GM12878 (cell line): ENCODE measurements at regions of chr12 and their contacts with region 1.

Region 1: DNA sequence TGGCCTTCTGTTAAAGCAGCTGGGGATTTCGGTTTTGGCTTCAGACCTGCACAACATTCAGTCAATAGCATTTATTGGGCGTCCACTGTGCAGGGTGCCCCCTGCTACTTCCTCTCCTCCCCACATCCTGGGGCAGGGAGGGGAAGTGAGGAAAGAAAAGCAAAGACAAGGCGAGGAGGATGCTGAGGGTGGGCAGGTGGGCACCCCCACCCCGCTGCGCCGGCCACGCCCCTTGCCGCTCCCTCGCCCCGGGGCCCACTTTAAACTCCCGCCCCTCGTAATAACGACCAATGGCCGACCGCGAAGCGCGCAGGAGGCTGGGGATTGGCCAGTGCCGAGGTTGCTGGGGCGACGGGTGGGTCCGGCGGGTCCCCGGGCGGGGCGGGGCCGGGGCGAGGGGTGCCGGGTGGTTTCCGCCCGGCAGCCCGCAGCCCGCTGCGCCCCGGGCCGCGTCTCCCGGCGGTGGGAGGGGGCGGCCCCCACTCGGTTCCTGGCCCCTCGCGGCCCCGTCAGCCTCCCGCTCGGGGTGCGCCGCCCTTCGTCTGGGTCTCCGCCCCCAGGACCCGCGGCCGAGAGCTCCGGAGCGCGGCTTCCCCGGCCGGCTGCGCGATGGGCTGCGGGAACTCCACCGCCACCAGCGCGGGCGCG is at the start of gene C12orf75:
- DNase-seq: peak; percentile 77
- ATAC-seq: peak; percentile 85
- H3K4me3 ChIP-seq: peak within 1 kb of the TSS; percentile 81
- H3K27ac ChIP-seq: peak within 1 kb of the TSS; percentile 49
- H3K4me1 ChIP-seq: peaks cover 41% of the 10 kb centered on the region
- H3K27me3 ChIP-seq: no peaks in the 10 kb centered on the region
- CTCF ChIP-seq: no peak
- EP300 ChIP-seq: no peak
- POLR2A ChIP-seq: peak; percentile 65
- RAD21 ChIP-seq: no peak
- polyA plus RNA-seq, gene C12orf75: 40.7 to 84.7 TPM

Region 2: DNA sequence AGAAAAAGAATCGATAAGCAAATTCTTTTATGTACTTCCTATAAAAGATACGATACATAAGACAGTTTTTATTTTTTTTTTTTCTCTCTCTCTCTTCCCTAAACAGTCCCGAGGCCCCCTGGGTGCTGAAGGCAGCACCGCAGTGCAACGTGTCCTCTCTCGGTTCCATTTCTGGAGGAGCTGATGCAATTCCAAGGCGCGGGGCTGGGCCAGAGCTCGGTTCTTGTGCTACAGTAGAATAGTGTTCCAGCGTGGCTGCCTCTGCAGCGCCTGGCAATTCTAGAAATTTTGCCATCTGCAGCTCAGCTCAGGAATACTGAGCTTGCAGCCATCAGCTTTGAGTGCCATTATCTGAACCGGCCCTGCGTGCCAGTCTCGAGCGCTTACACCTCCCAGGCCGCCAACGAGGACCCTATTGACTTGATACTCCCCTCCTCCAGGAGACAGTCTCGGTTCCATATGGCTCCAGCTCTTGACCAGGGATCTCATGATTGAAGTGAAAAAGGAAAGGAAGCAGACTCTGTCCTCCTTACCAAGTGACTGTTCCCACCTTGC is 246.8 kb before region 1 on chr12:
- CTCF ChIA-PET with region 1: no interaction called
- POLR2A ChIA-PET with region 1: no interaction called
- RAD21 ChIA-PET with region 1: no interaction called
- SMC1A ChIA-PET with region 1: no interaction called
- in situ Hi-C with region 1: no loop called
- intact Hi-C with region 1: no loop called
- DNase-seq: no peak
- ATAC-seq: no peak; the same call in 2 of the 3 replicates
- H3K4me3 ChIP-seq: peak overlapping the region; percentile 81
- H3K27ac ChIP-seq: peak overlapping the region; percentile 25; the same call in 1 of the 2 replicates
- H3K4me1 ChIP-seq: peaks cover 7% of the 10 kb centered on the region
- H3K27me3 ChIP-seq: no peaks in the 10 kb centered on the region; a peak in 1 of 4 replicates
- CTCF ChIP-seq: no peak
- EP300 ChIP-seq: no peak
- POLR2A ChIP-seq: no peak
- RAD21 ChIP-seq: no peak

Region 3: DNA sequence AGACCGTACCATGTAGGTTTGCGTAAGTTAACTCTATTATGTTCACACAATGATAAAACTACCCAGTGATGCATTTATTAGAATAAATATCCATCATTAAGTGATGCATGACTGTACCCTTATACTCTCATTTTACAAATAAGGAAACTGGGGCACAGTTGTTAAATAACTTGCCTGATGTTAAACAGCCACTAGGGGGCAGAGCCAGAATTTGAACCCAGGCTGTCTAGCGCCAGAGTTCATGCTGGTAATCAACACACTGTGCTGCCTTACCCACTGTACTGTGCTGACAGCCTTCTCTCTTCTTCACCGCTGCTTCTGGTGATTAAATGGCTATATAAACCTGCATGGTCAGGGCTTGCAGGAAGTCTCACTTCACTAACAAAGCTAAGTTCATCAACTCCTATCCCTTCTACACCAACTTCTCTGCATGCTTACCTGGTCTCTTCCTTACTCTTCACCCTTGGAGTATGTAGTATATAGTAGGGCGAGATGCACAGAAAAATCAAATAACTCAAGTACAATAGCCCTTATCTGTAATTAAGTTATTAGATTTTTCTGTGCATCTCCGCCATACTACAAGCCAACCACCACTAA is 50.8 kb before region 1 on chr12:
- CTCF ChIA-PET with region 1: interaction called, 5 read pairs
- POLR2A ChIA-PET with region 1: no interaction called
- RAD21 ChIA-PET with region 1: no interaction called
- SMC1A ChIA-PET with region 1: interaction called, 3 read pairs
- in situ Hi-C with region 1: no loop called
- intact Hi-C with region 1: loop called (anchors 5 kb)
- DNase-seq: no peak
- ATAC-seq: peak; percentile 96
- H3K4me3 ChIP-seq: no peak overlapping the region
- H3K27ac ChIP-seq: no peak overlapping the region
- H3K4me1 ChIP-seq: no peaks in the 10 kb centered on the region
- H3K27me3 ChIP-seq: no peaks in the 10 kb centered on the region
- CTCF ChIP-seq: peak; percentile 73 to 77 (median 75); a peak in 5 of 6 replicates
- EP300 ChIP-seq: no peak
- POLR2A ChIP-seq: no peak
- RAD21 ChIP-seq: peak; percentile 72

Region 4: DNA sequence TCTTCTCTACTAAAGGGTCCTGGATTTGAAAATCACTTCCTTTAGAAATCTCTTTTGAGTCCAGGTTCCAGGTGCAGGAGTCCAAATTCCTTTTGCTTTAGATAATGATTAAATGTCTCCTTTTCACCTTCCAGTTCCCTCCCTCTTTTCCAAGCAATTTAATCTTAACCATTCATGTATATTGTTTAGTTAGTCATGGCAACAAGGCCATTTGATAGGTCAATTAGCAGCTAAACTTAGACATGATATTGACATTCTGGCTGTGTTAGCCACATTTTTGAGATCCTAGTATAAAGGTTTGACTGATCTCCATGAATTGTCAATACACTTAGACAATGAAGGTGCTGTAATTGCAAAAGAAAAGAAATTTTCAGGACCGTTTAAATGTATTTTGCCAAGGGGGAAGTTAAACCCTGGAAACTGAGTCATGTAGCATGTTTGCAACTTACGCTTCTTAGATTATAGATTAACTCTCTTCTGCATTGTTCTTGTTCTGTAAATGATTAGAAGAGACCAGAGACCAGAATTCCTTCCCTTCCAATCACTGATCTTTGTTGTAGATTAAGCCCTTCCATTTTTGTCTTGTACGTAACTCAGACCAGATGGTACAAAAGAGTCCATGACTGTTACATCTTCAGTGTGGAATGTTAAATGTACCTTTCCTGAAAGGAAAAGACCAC is 12.3 kb before region 1 on chr12:
- CTCF ChIA-PET with region 1: interaction called, 29 read pairs
- POLR2A ChIA-PET with region 1: interaction called, 8 read pairs
- RAD21 ChIA-PET with region 1: interaction called, 6 read pairs
- SMC1A ChIA-PET with region 1: interaction called, 12 read pairs
- in situ Hi-C with region 1: no loop called
- intact Hi-C with region 1: no loop called
- DNase-seq: no peak
- ATAC-seq: no peak
- H3K4me3 ChIP-seq: no peak overlapping the region
- H3K27ac ChIP-seq: no peak overlapping the region
- H3K4me1 ChIP-seq: no peaks in the 10 kb centered on the region
- H3K27me3 ChIP-seq: no peaks in the 10 kb centered on the region
- CTCF ChIP-seq: no peak
- EP300 ChIP-seq: no peak
- POLR2A ChIP-seq: no peak
- RAD21 ChIP-seq: no peak

Region 5: DNA sequence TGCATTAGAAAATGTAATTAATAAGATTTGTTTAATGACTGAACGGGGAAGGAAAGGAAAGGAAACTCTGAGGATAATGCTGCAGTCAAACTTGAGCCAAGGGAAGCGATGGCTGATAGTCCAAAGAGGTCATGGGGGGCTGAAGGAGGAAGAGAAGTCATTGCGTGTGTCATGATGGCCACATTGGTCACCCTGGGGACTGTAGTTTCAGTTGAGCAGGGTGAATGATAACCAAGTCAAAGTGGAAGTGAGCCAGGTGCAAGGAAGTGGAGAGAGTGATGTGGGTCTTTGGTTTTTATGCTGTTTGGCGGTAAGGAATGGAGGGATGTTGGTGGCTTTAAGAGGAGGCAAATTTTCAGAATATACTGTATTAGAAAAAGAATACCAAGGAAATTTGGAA is 21.6 kb after region 1 on chr12:
- CTCF ChIA-PET with region 1: interaction called, 38 read pairs
- POLR2A ChIA-PET with region 1: interaction called, 38 read pairs
- RAD21 ChIA-PET with region 1: interaction called, 47 read pairs
- SMC1A ChIA-PET with region 1: interaction called, 102 read pairs
- in situ Hi-C with region 1: no loop called
- intact Hi-C with region 1: loop called (anchors 2 kb)
- DNase-seq: peak; percentile 72
- ATAC-seq: peak; percentile 91
- H3K4me3 ChIP-seq: 0 out of 2 replicates have a peak overlapping the region, but pooled peaks have one; percentile 13
- H3K27ac ChIP-seq: peak overlapping the region; percentile 62
- H3K4me1 ChIP-seq: peaks cover 28% of the 10 kb centered on the region
- H3K27me3 ChIP-seq: no peaks in the 10 kb centered on the region
- CTCF ChIP-seq: no peak
- EP300 ChIP-seq: peak; percentile 66 to 78; a peak in 3 of 4 replicates
- POLR2A ChIP-seq: no peak
- RAD21 ChIP-seq: no peak

Region 6: DNA sequence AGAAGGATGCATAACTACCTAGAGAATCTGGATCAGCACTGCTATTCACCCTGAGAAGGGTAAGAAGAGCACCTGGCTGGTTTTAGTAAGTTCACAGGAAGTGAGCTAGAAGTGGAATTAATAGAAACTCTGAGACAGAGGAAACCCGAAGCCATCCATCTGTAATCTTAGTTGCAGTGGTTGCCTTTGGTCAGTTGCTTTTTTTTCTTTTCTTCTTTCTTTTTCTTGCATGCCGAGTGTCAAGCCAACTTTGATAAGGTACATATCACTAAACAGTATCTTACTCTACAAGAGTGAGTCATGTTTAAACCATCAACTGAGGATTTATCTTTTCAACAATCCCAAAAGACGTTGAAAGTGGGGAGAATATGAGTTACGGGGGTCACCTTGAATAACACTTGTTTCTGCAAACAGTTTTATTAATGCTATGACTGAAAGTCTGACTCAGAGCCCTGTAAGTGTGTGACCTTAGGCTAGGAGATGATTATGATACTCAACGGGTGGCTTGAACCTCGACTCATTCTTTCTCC is 26.8 kb after region 1 on chr12:
- CTCF ChIA-PET with region 1: interaction called, 12 read pairs
- POLR2A ChIA-PET with region 1: interaction called, 38 read pairs
- RAD21 ChIA-PET with region 1: interaction called, 47 read pairs
- SMC1A ChIA-PET with region 1: interaction called, 102 read pairs
- in situ Hi-C with region 1: no loop called
- intact Hi-C with region 1: loop called (anchors 2 kb)
- DNase-seq: peak; percentile 45
- ATAC-seq: peak; percentile 84
- H3K4me3 ChIP-seq: peak overlapping the region; percentile 42; the same call in 1 of the 2 replicates
- H3K27ac ChIP-seq: peak overlapping the region; percentile 67
- H3K4me1 ChIP-seq: peaks cover 32% of the 10 kb centered on the region
- H3K27me3 ChIP-seq: no peaks in the 10 kb centered on the region
- CTCF ChIP-seq: no peak
- EP300 ChIP-seq: peak in 1 of 2 experiments; percentile 67; a peak in 2 of 4 replicates
- POLR2A ChIP-seq: no peak
- RAD21 ChIP-seq: no peak

Region 7: GRCh38 chr12:105374303-105374702 is 43.9 kb after region 1 on chr12:
- CTCF ChIA-PET with region 1: interaction called, 4 read pairs
- POLR2A ChIA-PET with region 1: no interaction called
- RAD21 ChIA-PET with region 1: interaction called, 5 read pairs
- SMC1A ChIA-PET with region 1: interaction called, 11 read pairs
- in situ Hi-C with region 1: no loop called
- intact Hi-C with region 1: no loop called
- DNase-seq: no peak
- ATAC-seq: no peak
- H3K4me3 ChIP-seq: no peak overlapping the region
- H3K27ac ChIP-seq: no peak overlapping the region
- H3K4me1 ChIP-seq: no peaks in the 10 kb centered on the region
- H3K27me3 ChIP-seq: no peaks in the 10 kb centered on the region
- CTCF ChIP-seq: no peak
- EP300 ChIP-seq: no peak
- POLR2A ChIP-seq: no peak
- RAD21 ChIP-seq: no peak